ENCODE measurements at regions of chr16 and their contacts with region 1.

Region 1: GRCh38 chr16:67017810-67018488 is 11.0 kb upstream of the CBFB start:
- DNase-seq: peak; percentile 84 to 91 (median 90)
- ATAC-seq: peak; percentile 92
- H3K4me3 ChIP-seq: no peak overlapping the region
- H3K27ac ChIP-seq: no peak overlapping the region
- H3K4me1 ChIP-seq: peaks cover 10 to 17% of the 10 kb centered on the region in 2 experiments; a peak in 4 of 5 replicates
- H3K27me3 ChIP-seq: no peaks in the 10 kb centered on the region
- CTCF ChIP-seq: peak; percentile 93 to 95 (median 94)
- EP300 ChIP-seq: no peak
- POLR2A ChIP-seq: no peak
- RAD21 ChIP-seq: peak; percentile 91 to 95

Region 2: GRCh38 chr16:66954097-66954659 is 63.8 kb before region 1 on chr16:
- CTCF ChIA-PET with region 1: interaction called, 12 read pairs
- POLR2A ChIA-PET with region 1: no interaction called
- in situ Hi-C with region 1: no loop called
- intact Hi-C with region 1: loop called (anchors 5 kb)
- DNase-seq: peak; percentile 71 to 88 (median 78)
- ATAC-seq: peak; percentile 97
- H3K4me3 ChIP-seq: no peak overlapping the region
- H3K27ac ChIP-seq: no peak overlapping the region
- H3K4me1 ChIP-seq: peaks cover 0 to 7% of the 10 kb centered on the region in 2 experiments; a peak in 1 of 5 replicates
- H3K27me3 ChIP-seq: no peaks in the 10 kb centered on the region
- CTCF ChIP-seq: peak; percentile 84 to 89 (median 88)
- EP300 ChIP-seq: no peak
- POLR2A ChIP-seq: no peak
- RAD21 ChIP-seq: peak; percentile 77 to 90

Region 3: GRCh38 chr16:67028555-67029248 is 10.8 kb after region 1 on chr16 and contains the start of gene CBFB:
- CTCF ChIA-PET with region 1: interaction called, 5 read pairs
- POLR2A ChIA-PET with region 1: interaction called, 15 read pairs
- in situ Hi-C with region 1: no loop called
- intact Hi-C with region 1: no loop called
- DNase-seq: peak; percentile 96 to 99 (median 98)
- ATAC-seq: peak; percentile 92
- H3K4me3 ChIP-seq: peak within 1 kb of the TSS; percentile 85
- H3K27ac ChIP-seq: peak within 1 kb of the TSS; percentile 97
- H3K4me1 ChIP-seq: peaks cover 13 to 29% of the 10 kb centered on the region in 2 experiments
- H3K27me3 ChIP-seq: no peaks in the 10 kb centered on the region
- CTCF ChIP-seq: peak; percentile 8 to 44 (median 12); a peak in 3 of 6 replicates
- EP300 ChIP-seq: peak; percentile 18
- POLR2A ChIP-seq: peak; percentile 98
- RAD21 ChIP-seq: peak in 1 of 2 experiments; percentile 2; a peak in 2 of 4 replicates
- polyA plus RNA-seq, gene CBFB: 22.0 to 40.7 TPM

Region 4: DNA sequence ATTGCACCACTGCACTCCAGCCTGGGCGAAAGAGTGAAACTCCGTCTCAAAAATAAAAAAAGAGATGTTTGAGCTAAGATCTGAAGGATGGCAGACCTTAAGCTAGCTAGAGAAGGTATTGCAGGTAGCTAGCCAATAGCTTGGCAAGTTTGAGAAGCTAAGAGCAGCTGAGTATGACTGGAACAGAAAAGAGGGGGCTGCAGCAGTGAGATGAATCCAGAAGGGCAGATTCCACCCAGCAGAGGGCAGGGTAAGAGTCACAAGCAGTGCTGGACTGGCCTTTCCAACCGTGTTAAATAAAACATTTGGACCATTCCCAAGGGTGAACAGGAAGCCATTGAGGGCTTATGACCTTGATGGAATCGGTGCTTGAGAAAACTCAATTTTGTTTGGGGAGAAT is 86.1 kb after region 1 on chr16:
- CTCF ChIA-PET with region 1: interaction called, 25 read pairs
- POLR2A ChIA-PET with region 1: interaction called, 3 read pairs
- in situ Hi-C with region 1: no loop called
- intact Hi-C with region 1: loop called (anchors 1 kb)
- DNase-seq: peak in 2 of 4 experiments; percentile 41 to 59
- ATAC-seq: peak; percentile 96
- H3K4me3 ChIP-seq: no peak overlapping the region
- H3K27ac ChIP-seq: no peak overlapping the region
- H3K4me1 ChIP-seq: peaks cover 2 to 3% of the 10 kb centered on the region in 2 experiments; a peak in 4 of 5 replicates
- H3K27me3 ChIP-seq: no peaks in the 10 kb centered on the region
- CTCF ChIP-seq: peak; percentile 53 to 60 (median 56); a peak in 5 of 6 replicates
- EP300 ChIP-seq: no peak
- POLR2A ChIP-seq: no peak
- RAD21 ChIP-seq: peak in 1 of 2 experiments; percentile 46; a peak in 2 of 4 replicates

Region 5: DNA sequence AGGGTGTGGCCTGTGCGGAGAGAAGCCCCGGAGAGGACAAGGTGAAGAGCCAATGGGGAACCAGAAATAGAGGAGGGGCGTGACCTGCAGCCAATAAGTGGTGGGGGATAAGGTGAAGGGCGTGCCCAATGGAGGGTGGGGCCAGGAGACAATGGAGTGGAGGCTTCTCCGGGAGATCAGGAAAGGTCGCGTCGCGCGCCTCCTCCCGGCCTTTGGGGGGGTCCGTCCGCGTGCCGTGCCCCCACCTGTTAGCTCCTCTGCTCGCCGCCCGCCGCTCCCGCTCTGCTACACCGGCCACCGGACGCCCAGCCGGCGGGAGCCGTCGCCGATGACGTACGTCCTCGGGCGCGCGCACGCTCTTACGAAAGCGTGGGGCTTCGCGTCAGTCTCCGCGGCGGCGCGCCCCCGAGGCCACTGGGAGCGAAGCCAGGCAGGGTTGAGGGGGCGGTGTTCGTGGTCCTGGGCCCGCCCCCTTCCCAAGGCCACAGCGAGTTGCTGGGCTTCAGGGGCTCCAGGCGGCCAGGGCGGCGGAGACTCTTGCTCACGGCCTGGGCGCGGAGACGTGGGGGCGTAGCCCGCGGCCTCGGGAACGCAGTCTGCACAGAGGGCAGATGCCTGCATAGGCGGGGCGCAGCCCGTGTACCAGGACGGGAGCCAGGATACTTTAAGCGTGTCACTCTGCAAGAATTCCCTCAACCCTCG is 165.8 kb after region 1 on chr16 and contains the start of gene MATCAP1:
- CTCF ChIA-PET with region 1: interaction called, 7 read pairs
- POLR2A ChIA-PET with region 1: no interaction called
- in situ Hi-C with region 1: no loop called
- intact Hi-C with region 1: loop called (anchors 10 kb)
- DNase-seq: peak; percentile 98 to 100 (median 98)
- ATAC-seq: peak; percentile 97
- H3K4me3 ChIP-seq: peak within 1 kb of the TSS; percentile 61
- H3K27ac ChIP-seq: peak within 1 kb of the TSS; percentile 91
- H3K4me1 ChIP-seq: peaks cover 13 to 50% of the 10 kb centered on the region in 2 experiments
- H3K27me3 ChIP-seq: no peaks in the 10 kb centered on the region
- CTCF ChIP-seq: no peak; a peak in 1 of 6 replicates
- EP300 ChIP-seq: no peak
- POLR2A ChIP-seq: peak; percentile 88
- RAD21 ChIP-seq: no peak
- polyA plus RNA-seq, gene MATCAP1: 3.4 to 3.8 TPM

Region 6: DNA sequence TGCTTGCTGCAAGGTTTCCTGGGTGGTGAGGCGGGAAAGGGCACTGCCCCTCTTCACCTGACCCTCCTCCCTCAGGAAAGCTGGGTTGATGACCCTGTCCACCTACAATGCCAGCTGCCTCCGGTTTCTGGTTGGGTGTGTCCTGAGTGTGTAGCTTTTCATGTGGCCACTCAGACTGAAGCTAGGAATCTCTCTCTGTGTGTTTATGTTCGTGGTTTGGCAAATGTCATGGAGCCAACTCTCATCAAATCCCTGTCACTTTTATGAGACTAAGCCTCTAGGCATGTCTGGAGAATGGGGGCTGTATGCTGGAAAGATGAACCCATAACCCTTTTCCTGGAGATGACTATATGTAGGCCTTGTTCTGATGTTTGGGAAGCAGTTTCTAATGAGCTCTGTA is 278.5 kb after region 1 on chr16:
- CTCF ChIA-PET with region 1: no interaction called
- POLR2A ChIA-PET with region 1: no interaction called
- in situ Hi-C with region 1: no loop called
- intact Hi-C with region 1: no loop called
- DNase-seq: no peak
- ATAC-seq: no peak
- H3K4me3 ChIP-seq: no peak overlapping the region
- H3K27ac ChIP-seq: no peak overlapping the region
- H3K4me1 ChIP-seq: 0 out of 5 replicates have a peak, but pooled peaks cover 0 to 3% of the 10 kb centered on the region in 2 experiments
- H3K27me3 ChIP-seq: peaks cover 23 to 37% of the 10 kb centered on the region in 2 experiments
- CTCF ChIP-seq: no peak
- EP300 ChIP-seq: no peak
- POLR2A ChIP-seq: no peak
- RAD21 ChIP-seq: no peak

Region 7: GRCh38 chr16:68031951-68032350 is 1014.0 kb after region 1 on chr16:
- CTCF ChIA-PET with region 1: no interaction called
- POLR2A ChIA-PET with region 1: no interaction called
- in situ Hi-C with region 1: no loop called
- intact Hi-C with region 1: no loop called
- DNase-seq: no peak
- ATAC-seq: no peak
- H3K4me3 ChIP-seq: no peak overlapping the region
- H3K27ac ChIP-seq: no peak overlapping the region
- H3K4me1 ChIP-seq: peaks cover 2 to 9% of the 10 kb centered on the region in 2 experiments; a peak in 2 of 5 replicates
- H3K27me3 ChIP-seq: no peaks in the 10 kb centered on the region
- CTCF ChIP-seq: no peak
- EP300 ChIP-seq: no peak
- POLR2A ChIP-seq: no peak
- RAD21 ChIP-seq: no peak